ENCODE measurements at regions of chr7 and their contacts with region 1.

Region 1: DNA sequence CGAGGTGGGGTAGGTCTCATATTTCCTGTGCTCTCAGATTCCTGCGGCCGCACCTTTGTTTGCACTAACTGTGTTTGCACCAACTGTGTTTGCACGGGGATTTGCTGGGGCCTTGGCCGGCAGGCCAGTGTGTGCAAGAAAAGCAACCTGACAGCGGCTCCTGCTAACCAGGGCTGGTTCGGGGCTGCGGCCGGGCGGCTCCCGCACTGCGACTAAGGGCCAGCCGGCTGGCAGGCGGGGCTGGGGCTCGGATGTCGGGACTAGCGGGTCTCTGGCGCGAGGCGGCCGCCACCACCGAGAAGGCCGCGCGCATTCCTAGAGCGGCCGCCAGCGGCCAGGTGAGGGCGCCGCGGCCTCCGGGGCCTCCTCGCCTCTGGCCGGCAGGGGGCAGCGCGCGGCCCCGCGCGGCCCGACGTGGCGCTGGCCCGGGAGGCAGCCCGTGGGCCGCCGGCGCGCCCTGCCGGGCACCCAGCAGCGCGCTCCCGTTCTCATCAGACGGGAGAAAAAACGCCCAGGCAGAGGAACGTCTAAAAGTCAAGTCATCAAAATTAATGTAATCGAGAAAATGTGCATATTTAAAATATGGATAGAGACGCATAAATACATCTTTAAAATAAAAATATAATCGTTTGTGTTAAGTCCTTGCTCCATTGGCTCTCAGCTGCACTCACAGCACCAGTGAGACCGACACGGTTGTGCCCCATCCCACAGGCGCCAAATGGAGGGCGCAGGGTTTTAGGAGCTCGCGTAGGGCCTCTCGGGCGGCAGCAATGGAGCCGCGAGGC is 38.5 kb downstream of the ZNF777 start:
- DNase-seq: peak; percentile 67
- ATAC-seq: peak; percentile 98
- H3K4me3 Mint-ChIP-seq: peak overlapping the region; percentile 72
- H3K27ac Mint-ChIP-seq: peak overlapping the region; percentile 75
- H3K4me1 Mint-ChIP-seq: peaks cover 10% of the 10 kb centered on the region
- H3K27me3 Mint-ChIP-seq: no peaks in the 10 kb centered on the region
- CTCF ChIP-seq: peak; percentile 61

Region 2: DNA sequence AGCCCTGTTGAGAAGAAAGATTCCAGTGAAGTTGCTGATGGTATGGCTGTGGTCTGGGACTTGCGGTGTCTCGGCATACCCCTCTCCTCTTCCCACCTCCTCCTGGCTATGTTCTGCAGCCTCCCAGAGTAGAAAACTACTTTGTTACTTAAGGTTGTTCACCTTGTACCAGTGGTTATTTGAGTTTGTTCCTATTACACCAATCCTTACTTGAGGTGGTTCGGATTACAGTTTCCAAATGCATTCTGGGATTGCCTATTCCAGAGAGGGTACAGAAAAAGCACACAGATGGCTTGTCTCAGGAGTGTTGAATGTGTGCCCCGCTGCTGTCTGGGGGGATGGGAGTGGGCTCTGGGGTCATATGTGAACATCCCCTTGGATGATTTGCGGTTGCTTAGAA is 167.1 kb before region 1 on chr7:
- CTCF ChIA-PET with region 1: no interaction called
- POLR2A ChIA-PET with region 1: no interaction called
- intact Hi-C with region 1: no loop called
- DNase-seq: no peak
- ATAC-seq: no peak
- H3K4me3 Mint-ChIP-seq: no peak overlapping the region
- H3K27ac Mint-ChIP-seq: no peak overlapping the region
- H3K4me1 Mint-ChIP-seq: peaks cover 2% of the 10 kb centered on the region
- H3K27me3 Mint-ChIP-seq: no peaks in the 10 kb centered on the region
- CTCF ChIP-seq: no peak

Region 3: GRCh38 chr7:149404825-149405224 is 17.5 kb before region 1 on chr7:
- CTCF ChIA-PET with region 1: no interaction called
- POLR2A ChIA-PET with region 1: no interaction called
- intact Hi-C with region 1: no loop called
- DNase-seq: no peak
- ATAC-seq: no peak
- H3K4me3 Mint-ChIP-seq: no peak overlapping the region
- H3K27ac Mint-ChIP-seq: no peak overlapping the region
- H3K4me1 Mint-ChIP-seq: no peaks in the 10 kb centered on the region
- H3K27me3 Mint-ChIP-seq: peaks cover 12% of the 10 kb centered on the region
- CTCF ChIP-seq: no peak

Region 4: DNA sequence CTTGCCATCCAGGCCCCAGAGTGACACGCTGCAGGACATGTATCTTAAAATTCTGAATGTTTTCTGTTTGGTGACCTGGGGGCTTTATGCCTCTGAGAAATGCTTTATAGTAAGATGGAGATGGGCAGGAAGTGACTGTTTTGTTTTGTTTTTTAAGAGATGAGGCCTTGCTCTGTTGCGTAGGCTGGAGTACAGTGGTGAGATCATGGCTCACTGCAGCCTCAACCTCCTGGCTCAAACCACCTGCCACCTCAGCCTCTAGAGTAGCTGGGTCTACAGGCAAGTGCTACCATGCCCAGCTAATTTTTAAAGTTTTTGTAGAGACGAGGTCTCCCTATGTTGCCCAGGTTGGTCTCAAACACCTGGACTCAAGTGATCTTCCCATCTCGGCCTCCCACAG is 17.9 kb after region 1 on chr7:
- CTCF ChIA-PET with region 1: interaction called, 13 read pairs
- POLR2A ChIA-PET with region 1: interaction called, 4 read pairs
- intact Hi-C with region 1: no loop called
- DNase-seq: peak; percentile 64
- ATAC-seq: peak; percentile 96
- H3K4me3 Mint-ChIP-seq: no peak overlapping the region
- H3K27ac Mint-ChIP-seq: peak overlapping the region; percentile 81
- H3K4me1 Mint-ChIP-seq: peaks cover 15% of the 10 kb centered on the region
- H3K27me3 Mint-ChIP-seq: no peaks in the 10 kb centered on the region
- CTCF ChIP-seq: no peak

Region 5: DNA sequence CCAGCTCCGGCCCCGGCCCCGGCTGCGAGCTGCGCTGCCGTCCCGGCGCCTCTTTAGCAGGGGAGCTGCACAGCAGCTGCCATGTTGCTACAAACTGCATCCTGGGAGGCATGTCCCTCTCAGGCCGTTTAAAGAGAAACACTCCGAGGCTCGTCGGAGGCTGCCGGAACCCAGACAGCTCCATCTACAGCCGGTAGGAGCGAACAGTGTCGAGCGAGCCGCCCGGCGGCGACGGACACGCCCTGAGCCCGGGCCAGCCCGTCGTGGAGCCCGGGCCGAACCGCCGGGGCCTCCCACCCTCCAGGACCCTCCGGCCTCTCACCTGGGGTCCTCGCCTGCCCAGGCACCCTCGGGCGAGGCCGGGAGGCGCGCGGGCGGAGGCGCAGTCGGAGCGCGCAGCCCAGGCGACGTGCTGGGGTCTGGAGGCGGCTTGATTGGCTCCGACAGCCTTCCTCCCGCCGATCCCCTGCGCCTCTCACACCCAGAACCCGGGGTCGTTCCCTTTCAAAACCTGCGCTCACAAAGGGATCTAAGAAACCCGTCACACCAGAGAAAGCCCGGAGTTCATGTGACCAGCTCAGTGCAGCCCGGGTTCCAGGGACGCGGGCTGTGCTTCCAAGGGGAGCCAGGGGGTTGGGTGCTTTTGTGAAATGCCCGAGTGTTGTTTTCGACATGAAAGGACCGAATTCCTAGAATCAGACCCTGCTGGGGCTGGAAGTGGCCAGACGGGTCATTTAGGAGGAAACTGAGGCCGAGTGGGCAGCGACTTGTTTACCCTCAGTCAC is 38.4 kb after region 1 on chr7 and contains the start of gene ZNF777:
- CTCF ChIA-PET with region 1: interaction called, 14 read pairs
- POLR2A ChIA-PET with region 1: interaction called, 4 read pairs
- intact Hi-C with region 1: no loop called
- DNase-seq: peak; percentile 87
- ATAC-seq: peak; percentile 95
- H3K4me3 Mint-ChIP-seq: peak within 1 kb of the TSS; percentile 77
- H3K27ac Mint-ChIP-seq: peak within 1 kb of the TSS; percentile 86
- H3K4me1 Mint-ChIP-seq: peaks cover 18% of the 10 kb centered on the region
- H3K27me3 Mint-ChIP-seq: peaks cover 9% of the 10 kb centered on the region
- CTCF ChIP-seq: peak; percentile 59
- total RNA-seq, gene ZNF777: 11.7 to 12.5 TPM

Region 6: DNA sequence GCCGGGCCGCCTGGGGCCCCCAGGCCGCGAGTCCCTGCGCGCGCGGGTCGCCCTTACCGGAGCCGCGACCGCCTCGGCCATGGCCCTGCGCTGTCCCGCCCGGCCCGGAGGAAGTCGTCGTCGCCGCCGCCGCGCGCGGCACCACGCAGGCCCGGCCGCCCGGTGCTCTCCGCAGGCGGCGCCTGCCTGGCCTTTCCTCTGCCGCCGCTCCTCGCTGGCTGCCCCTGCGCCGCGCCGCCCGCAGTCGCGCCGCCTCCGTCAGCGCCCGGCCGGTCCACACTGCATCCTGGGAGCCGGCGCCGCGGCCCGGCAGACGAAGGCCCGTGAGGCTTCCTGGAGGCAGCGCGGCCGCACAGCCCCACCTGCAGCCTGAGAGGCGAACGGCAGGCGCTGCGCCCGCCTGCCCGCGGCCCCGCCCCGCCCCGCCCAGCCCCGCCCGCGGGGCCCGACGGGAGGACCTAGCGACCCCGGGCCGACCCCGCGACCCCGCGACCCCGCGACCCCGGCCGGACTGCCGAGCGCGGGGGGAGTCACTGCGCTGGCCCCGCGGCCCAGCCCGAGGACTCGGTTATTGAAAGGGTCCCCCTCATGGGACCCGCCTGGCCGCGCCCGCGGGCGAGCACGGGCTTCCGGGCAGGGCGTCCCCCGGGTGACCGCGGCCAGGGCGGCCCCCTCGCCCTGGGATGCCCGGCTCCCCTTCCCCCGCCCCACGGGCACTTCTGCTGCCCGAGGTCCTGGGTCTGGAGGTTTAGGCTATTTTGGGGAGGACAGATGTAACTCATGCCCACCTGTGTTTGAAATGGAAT is 75.3 kb after region 1 on chr7 and contains the start of gene ZNF746:
- CTCF ChIA-PET with region 1: interaction called, 9 read pairs
- POLR2A ChIA-PET with region 1: interaction called, 6 read pairs
- intact Hi-C with region 1: loop called (anchors 5 kb)
- DNase-seq: peak; percentile 85
- ATAC-seq: peak; percentile 96
- H3K4me3 Mint-ChIP-seq: peak within 1 kb of the TSS; percentile 93
- H3K27ac Mint-ChIP-seq: peak within 1 kb of the TSS; percentile 93
- H3K4me1 Mint-ChIP-seq: peaks cover 28% of the 10 kb centered on the region
- H3K27me3 Mint-ChIP-seq: no peaks in the 10 kb centered on the region
- CTCF ChIP-seq: peak; percentile 19
- total RNA-seq, gene ZNF746: 12.6 to 13.0 TPM

Measured in activated CD8-positive, alpha-beta T cell treated with anti-CD3 and anti-CD28 coated beads for 36 hours (primary cell).